ENCODE measurements at regions of chr14 and their contacts with region 1.

Region 1: DNA sequence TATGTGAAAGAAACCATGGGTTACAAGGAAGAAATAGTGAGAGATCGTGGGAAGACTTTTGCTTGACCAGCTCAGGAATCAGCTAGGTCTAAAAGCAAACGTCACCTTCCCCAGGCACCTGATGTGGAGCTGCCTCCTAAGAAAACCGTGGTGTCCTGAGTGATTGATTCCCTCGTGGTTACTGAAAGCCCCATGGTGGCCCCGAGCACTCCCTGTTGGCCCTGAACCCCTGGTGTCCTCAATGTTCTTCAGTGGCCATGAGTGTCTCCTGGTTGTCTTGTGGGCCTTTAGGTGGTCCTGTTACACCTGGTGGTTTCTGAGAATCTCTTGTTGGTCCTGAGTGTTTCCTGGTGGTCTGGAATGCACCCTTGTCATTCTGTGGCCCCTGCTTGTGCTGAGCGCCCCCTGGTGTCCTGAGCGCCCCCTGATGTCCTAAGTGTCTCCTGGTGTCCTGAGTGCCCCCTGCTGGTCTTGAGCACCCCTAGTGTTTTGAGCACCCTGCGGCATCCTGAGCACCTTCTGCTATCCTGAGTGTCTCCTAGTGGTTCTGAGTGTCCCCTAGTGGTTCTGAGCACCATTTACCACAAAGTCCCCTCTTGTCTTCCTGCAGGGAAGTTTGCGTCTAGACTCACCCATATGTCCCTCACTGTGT is 518.7 kb downstream of the TMEM121 start:
- DNase-seq: peak; percentile 76 to 88
- ATAC-seq: peak; percentile 90 to 99 (median 99)
- H3K4me3 ChIP-seq: no peak overlapping the region
- H3K4me3 Mint-ChIP-seq: no peak overlapping the region
- H3K27ac ChIP-seq: no peak overlapping the region
- H3K27ac Mint-ChIP-seq: no peak overlapping the region
- H3K4me1 ChIP-seq: no peaks in the 10 kb centered on the region
- H3K4me1 Mint-ChIP-seq: peaks cover 0 to 6% of the 10 kb centered on the region in 2 donors
- H3K27me3 ChIP-seq: no peaks in the 10 kb centered on the region
- H3K27me3 Mint-ChIP-seq: peaks cover 13 to 48% of the 10 kb centered on the region in 2 donors
- CTCF ChIP-seq: peak; percentile 78

Region 2: DNA sequence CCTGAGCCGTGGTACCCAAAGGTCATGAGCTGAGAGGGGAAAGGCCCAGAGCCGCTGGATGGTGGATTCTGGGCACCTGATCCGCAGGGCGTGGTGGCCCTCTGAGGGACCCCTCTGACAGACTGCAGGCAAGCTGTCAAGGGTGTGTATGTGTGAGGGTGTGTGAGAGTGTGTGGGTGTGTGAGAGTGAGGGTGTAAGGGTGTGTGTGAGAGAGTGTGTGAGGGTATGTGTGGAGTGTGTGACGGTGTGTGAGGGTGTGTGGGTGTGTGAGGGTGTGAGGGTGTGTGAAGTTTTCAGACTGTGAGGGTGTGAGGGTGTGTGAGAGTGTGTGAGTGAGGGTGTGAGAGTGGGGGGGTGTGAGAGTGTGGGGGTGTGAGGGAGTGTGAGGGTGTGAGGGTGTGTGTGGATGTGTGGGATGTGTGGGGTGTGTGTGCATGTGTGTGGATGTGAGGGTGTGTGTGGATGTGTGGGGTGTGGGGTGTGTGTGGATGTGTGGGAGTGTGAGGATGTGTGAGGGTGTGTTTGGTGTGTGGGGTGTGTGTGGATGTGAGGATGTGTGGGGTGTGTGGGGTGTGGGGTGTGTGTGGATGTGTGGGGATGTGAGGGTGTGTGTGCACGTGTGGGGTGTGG is 362.0 kb before region 1 on chr14:
- intact Hi-C with region 1: loop called (anchors 10 kb)
- DNase-seq: no peak
- ATAC-seq: no peak
- H3K4me3 ChIP-seq: no peak overlapping the region
- H3K4me3 Mint-ChIP-seq: no peak overlapping the region
- H3K27ac ChIP-seq: peak overlapping the region; percentile 63
- H3K27ac Mint-ChIP-seq: peak overlapping the region in 1 of 2 donors; percentile 89
- H3K4me1 ChIP-seq: peaks cover 14% of the 10 kb centered on the region
- H3K4me1 Mint-ChIP-seq: peaks cover 0 to 12% of the 10 kb centered on the region in 2 donors
- H3K27me3 ChIP-seq: no peaks in the 10 kb centered on the region
- H3K27me3 Mint-ChIP-seq: peaks cover 0 to 3% of the 10 kb centered on the region in 2 donors
- CTCF ChIP-seq: no peak

Region 3: GRCh38 chr14:106163306-106163705 is 118.2 kb after region 1 on chr14:
- intact Hi-C with region 1: no loop called
- DNase-seq: no peak
- ATAC-seq: no peak
- H3K4me3 ChIP-seq: no peak overlapping the region
- H3K4me3 Mint-ChIP-seq: no peak overlapping the region
- H3K27ac ChIP-seq: no peak overlapping the region
- H3K27ac Mint-ChIP-seq: no peak overlapping the region
- H3K4me1 ChIP-seq: peaks cover 5% of the 10 kb centered on the region
- H3K4me1 Mint-ChIP-seq: peaks cover 9 to 10% of the 10 kb centered on the region in 2 donors
- H3K27me3 ChIP-seq: peaks cover 24% of the 10 kb centered on the region
- H3K27me3 Mint-ChIP-seq: peaks cover 56 to 84% of the 10 kb centered on the region in 2 donors
- CTCF ChIP-seq: no peak

Region 4: DNA sequence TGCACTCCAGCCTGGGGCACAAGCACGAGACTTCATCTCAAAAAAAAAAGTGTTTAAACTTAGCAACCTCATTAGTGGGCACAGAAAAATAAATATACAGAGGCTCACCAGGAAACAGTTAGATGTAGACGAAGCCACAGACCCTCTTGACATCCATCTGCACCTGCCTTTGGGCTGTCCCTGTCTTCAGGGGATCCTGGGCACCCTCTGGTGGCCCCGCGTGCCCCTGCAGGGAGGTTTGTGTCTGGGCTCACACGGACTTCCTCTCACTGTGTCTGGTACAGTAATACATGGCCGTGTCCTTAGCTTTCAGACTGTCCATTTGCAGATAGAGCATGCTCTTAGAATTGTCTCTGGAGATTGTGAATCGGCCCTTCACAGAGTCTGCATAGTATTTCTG is 397.8 kb after region 1 on chr14:
- intact Hi-C with region 1: no loop called
- DNase-seq: peak; percentile 16 to 45
- ATAC-seq: peak; percentile 71 to 93 (median 77)
- H3K4me3 ChIP-seq: no peak overlapping the region
- H3K4me3 Mint-ChIP-seq: no peak overlapping the region
- H3K27ac ChIP-seq: no peak overlapping the region
- H3K27ac Mint-ChIP-seq: no peak overlapping the region
- H3K4me1 ChIP-seq: no peaks in the 10 kb centered on the region
- H3K4me1 Mint-ChIP-seq: no peaks in the 10 kb centered on the region
- H3K27me3 ChIP-seq: no peaks in the 10 kb centered on the region
- H3K27me3 Mint-ChIP-seq: peaks cover 7 to 38% of the 10 kb centered on the region in 2 donors
- CTCF ChIP-seq: peak; percentile 35